AG04449 (cell line): ENCODE measurements at regions of chr11 and their contacts with region 1.

Region 1: GRCh38 chr11:73177778-73178577 is 35.9 kb upstream of the FCHSD2 start:
- DNase-seq: peak; percentile 36
- H3K4me3 ChIP-seq: no peak overlapping the region
- CTCF ChIP-seq: peak; percentile 85

Region 2: GRCh38 chr11:72814286-72815109 is 363.5 kb before region 1 on chr11 and contains the start of gene ATG16L2:
- CTCF ChIA-PET with region 1: interaction called, 12 read pairs
- POLR2A ChIA-PET with region 1: no interaction called
- DNase-seq: no peak
- H3K4me3 ChIP-seq: peak within 1 kb of the TSS; percentile 91
- CTCF ChIP-seq: peak; percentile 21

Region 3: DNA sequence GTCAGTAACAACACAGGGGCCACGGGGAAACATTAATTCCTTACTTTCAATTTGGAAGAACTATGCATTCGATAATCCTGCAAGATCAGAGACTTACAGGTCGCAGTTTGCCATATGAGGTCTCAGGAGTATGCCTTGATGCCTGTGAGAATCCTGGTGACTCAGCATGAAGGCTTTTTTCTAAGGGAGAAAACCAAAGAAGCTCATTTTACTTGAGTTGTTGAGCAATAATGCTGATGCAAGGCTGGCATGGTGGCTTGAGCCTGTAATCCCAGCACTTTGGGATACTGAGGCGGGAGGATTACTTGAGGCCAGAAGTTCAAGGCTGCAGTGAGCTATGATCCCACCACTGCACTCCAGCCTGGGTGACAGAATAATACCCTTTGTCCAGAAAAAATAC is 337.2 kb before region 1 on chr11:
- CTCF ChIA-PET with region 1: interaction called, 324 read pairs
- POLR2A ChIA-PET with region 1: no interaction called
- DNase-seq: peak; percentile 73
- H3K4me3 ChIP-seq: no peak overlapping the region
- CTCF ChIP-seq: no peak

Region 4: DNA sequence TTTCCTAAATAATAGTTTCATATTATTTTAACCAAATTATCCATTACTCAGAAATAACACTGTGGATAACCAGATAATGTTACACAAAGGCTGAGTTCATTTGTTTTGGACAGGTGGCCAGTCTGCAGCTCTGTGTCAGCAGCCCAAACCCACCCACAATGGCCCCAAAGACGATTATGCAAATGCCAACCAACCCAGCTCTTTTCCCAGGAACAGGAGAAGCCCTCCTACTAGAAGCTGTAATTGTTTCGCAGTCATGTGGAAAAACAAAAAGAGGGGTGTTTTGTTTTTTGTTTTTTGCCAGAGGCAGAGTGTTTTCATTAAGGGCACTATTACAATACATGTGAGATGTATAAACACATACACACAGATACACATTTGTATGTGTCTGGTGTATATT is 137.9 kb before region 1 on chr11:
- CTCF ChIA-PET with region 1: no interaction called
- POLR2A ChIA-PET with region 1: no interaction called
- DNase-seq: no peak
- H3K4me3 ChIP-seq: no peak overlapping the region
- CTCF ChIP-seq: no peak

Region 5: GRCh38 chr11:73072901-73073481 is 105.0 kb before region 1 on chr11:
- CTCF ChIA-PET with region 1: no interaction called
- POLR2A ChIA-PET with region 1: no interaction called
- DNase-seq: no peak
- H3K4me3 ChIP-seq: no peak overlapping the region
- CTCF ChIP-seq: no peak

Region 6: DNA sequence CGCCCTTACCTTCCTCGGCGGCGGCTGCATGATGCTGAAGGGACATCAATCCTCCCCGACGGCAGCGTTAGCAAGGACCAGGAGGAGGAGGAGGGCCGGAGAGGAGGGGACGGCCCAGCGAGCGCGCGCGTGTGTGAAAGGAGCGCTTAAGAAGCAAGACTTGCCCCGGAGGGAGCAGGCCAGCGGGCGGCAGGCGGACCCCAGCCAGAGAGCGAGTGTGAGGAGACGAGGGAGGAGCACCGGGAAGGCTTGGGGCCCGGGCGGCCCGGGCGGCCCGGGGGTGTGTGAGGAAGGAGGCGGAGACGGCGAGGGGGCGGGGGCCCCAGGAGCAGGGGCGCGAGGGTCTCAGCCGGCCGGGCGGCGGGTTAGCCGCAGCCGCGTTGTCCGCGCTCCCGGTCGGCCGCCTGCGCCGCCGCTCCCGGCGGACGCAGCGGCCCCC is 36.1 kb before region 1 on chr11:
- CTCF ChIA-PET with region 1: interaction called, 30 read pairs
- POLR2A ChIA-PET with region 1: no interaction called
- DNase-seq: no peak
- H3K4me3 ChIP-seq: peak overlapping the region; percentile 94
- CTCF ChIP-seq: peak; percentile 19

Region 7: DNA sequence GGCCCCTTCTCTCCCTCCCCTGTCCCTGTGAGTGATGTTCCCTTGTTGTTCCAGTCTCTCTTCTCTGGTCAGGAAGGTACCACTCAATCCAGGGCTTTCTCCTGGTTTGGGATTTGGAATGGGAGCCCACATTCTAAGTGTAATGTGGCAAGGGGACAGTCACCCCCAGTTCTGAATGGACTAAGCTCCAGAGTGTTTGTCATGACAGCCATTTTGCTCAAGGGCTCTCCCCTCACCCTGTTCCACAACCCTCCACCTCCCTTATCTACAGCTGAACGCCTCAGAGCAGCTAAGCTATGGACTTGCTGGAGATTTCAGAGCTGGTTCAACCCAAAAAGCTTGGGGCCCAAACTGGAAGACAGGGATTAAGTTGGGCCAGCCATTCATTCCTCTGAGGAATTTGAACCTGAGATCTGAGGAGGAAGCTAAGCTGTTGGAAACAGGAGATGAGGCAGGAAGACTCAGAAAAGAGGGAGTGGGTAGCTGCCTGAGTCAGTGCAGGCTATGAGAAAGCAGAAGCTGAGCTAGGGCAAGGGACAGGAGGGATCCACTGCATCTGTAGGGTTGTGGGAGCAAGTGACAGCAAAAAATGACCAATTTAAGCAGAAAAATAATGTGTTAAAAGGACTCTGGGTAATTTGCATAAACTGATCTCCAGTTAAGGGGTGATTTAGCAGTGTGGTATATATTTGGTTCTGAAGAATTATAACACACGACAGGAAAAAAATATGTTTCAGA is 13.0 kb before region 1 on chr11:
- CTCF ChIA-PET with region 1: interaction called, 95 read pairs
- POLR2A ChIA-PET with region 1: no interaction called
- DNase-seq: no peak
- H3K4me3 ChIP-seq: no peak overlapping the region
- CTCF ChIP-seq: no peak